ENCODE measurements at regions of chr10 and their contacts with region 1.

Region 1: GRCh38 chr10:52215745-52216361 is 98.2 kb upstream of the DKK1 start:
- DNase-seq: peak; percentile 60
- H3K4me3 Mint-ChIP-seq: no peak overlapping the region
- H3K27ac Mint-ChIP-seq: no peak overlapping the region
- H3K4me1 Mint-ChIP-seq: no peaks in the 10 kb centered on the region
- H3K27me3 Mint-ChIP-seq: no peaks in the 10 kb centered on the region

Region 2: DNA sequence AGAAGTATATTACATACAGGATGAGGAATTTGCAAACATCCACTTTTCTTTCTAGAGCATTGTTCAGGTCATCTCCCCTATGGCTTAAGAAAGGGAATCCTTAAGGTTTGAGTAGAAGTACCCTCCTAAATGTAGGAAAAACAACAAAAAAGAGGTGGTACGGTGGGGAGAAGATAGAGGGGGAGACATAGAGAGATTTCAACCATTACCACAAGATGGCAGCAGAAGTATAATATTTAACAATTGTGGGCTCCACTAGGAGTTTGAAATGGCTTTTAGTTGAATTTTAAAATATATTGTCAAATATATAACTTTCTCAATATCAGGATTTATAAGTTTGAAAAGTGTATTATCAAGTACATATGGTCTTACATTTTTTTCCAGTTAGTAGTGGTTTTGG is 1214.3 kb before region 1 on chr10:
- CTCF ChIA-PET with region 1: interaction called, 7 read pairs
- intact Hi-C with region 1: loop called (anchors 1 kb)
- DNase-seq: no peak
- H3K4me3 Mint-ChIP-seq: no peak overlapping the region
- H3K27ac Mint-ChIP-seq: no peak overlapping the region
- H3K4me1 Mint-ChIP-seq: no peaks in the 10 kb centered on the region
- H3K27me3 Mint-ChIP-seq: peaks cover 4% of the 10 kb centered on the region

Region 3: GRCh38 chr10:51010977-51011376 is 1204.9 kb before region 1 on chr10:
- CTCF ChIA-PET with region 1: interaction called, 7 read pairs
- intact Hi-C with region 1: loop called (anchors 1 kb)
- DNase-seq: peak; percentile 8
- H3K4me3 Mint-ChIP-seq: no peak overlapping the region
- H3K27ac Mint-ChIP-seq: no peak overlapping the region
- H3K4me1 Mint-ChIP-seq: no peaks in the 10 kb centered on the region
- H3K27me3 Mint-ChIP-seq: peaks cover 9% of the 10 kb centered on the region

Region 4: GRCh38 chr10:51063659-51064535 is 1152.0 kb before region 1 on chr10:
- CTCF ChIA-PET with region 1: no interaction called
- intact Hi-C with region 1: loop called (anchors 5 kb)
- DNase-seq: no peak
- H3K4me3 Mint-ChIP-seq: no peak overlapping the region
- H3K27ac Mint-ChIP-seq: no peak overlapping the region
- H3K4me1 Mint-ChIP-seq: no peaks in the 10 kb centered on the region
- H3K27me3 Mint-ChIP-seq: peaks cover 3% of the 10 kb centered on the region

Region 5: GRCh38 chr10:51389415-51390321 is 826.2 kb before region 1 on chr10:
- CTCF ChIA-PET with region 1: interaction called, 6 read pairs
- intact Hi-C with region 1: loop called (anchors 1 kb)
- DNase-seq: peak; percentile 65
- H3K4me3 Mint-ChIP-seq: no peak overlapping the region
- H3K27ac Mint-ChIP-seq: no peak overlapping the region
- H3K4me1 Mint-ChIP-seq: no peaks in the 10 kb centered on the region
- H3K27me3 Mint-ChIP-seq: peaks cover 3% of the 10 kb centered on the region

Region 6: GRCh38 chr10:51879238-51879637 is 336.6 kb before region 1 on chr10:
- CTCF ChIA-PET with region 1: no interaction called
- intact Hi-C with region 1: loop called (anchors 10 kb)
- DNase-seq: peak; percentile 55
- H3K4me3 Mint-ChIP-seq: no peak overlapping the region
- H3K27ac Mint-ChIP-seq: no peak overlapping the region
- H3K4me1 Mint-ChIP-seq: peaks cover 18% of the 10 kb centered on the region
- H3K27me3 Mint-ChIP-seq: no peaks in the 10 kb centered on the region

Region 7: DNA sequence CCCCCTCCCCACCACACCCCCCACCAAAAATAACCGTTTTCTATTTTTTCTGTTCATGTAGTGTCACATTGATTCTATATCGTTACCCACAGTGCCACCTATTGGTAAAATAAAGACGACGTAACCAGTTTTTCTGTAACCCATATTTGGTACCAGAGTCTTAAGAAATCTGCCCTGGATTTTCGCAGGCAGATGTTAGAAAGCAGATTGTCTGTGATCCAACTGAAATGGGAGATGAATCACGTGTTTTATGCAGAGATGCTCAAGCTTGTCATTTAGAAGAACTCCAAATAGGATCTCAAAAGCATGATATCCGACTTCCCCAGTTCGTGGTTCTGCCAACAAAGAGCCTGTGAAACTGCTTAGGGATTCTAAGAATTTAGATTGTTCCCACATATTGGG is 255.4 kb before region 1 on chr10:
- CTCF ChIA-PET with region 1: interaction called, 3 read pairs
- intact Hi-C with region 1: loop called (anchors 1 kb)
- DNase-seq: no peak
- H3K4me3 Mint-ChIP-seq: no peak overlapping the region
- H3K27ac Mint-ChIP-seq: no peak overlapping the region
- H3K4me1 Mint-ChIP-seq: no peaks in the 10 kb centered on the region
- H3K27me3 Mint-ChIP-seq: peaks cover 16% of the 10 kb centered on the region